ENCODE measurements at regions of chr4 and their contacts with region 1.

Region 1: GRCh38 chr4:110631584-110632505 is 9.0 kb upstream of the PITX2 start:
- DNase-seq: no peak
- ATAC-seq: peak; percentile 99
- H3K4me3 ChIP-seq: no peak overlapping the region
- H3K27ac ChIP-seq: no peak overlapping the region
- H3K4me1 ChIP-seq: no peaks in the 10 kb centered on the region
- H3K27me3 ChIP-seq: peaks cover 18 to 42% of the 10 kb centered on the region in 2 experiments
- CTCF ChIP-seq: peak; percentile 52 to 75 (median 61)
- EP300 ChIP-seq: no peak
- POLR2A ChIP-seq: no peak
- RAD21 ChIP-seq: peak; percentile 61

Region 2: DNA sequence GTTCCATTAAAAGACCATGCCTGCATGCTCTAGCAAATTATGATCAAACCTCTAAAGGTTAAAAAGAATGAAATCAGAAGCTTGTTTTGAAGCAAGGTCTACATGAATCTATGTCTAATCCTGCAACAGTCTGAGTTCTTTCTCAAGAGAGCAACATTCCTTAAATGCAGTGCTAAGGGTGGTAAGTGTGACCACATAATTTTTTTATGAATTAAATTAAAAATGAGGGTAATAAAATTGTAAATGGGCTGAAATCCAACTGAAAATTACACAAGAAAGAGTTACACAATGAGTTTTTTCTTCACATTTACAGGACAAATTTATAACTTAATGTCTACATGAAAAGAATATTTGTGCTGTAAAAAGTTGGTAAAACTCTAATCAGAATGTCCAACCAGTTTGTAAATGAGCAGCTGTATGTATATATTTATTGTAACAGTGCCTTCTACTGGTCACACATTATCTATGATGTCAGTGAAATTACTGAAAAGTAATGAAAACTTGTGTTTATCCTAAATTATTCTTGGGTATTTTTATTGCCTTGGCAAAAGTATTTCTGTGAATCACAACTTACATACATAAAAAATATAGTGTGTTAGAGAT is 327.3 kb after region 1 on chr4:
- CTCF ChIA-PET with region 1: interaction called, 9 read pairs
- POLR2A ChIA-PET with region 1: no interaction called
- RAD21 ChIA-PET with region 1: no interaction called
- SMC1A ChIA-PET with region 1: interaction called, 3 read pairs
- in situ Hi-C with region 1: loop called (anchors 10 kb)
- intact Hi-C with region 1: loop called (anchors 5 kb)
- DNase-seq: no peak
- ATAC-seq: no peak
- H3K4me3 ChIP-seq: no peak overlapping the region
- H3K27ac ChIP-seq: no peak overlapping the region
- H3K4me1 ChIP-seq: no peaks in the 10 kb centered on the region
- H3K27me3 ChIP-seq: no peaks in the 10 kb centered on the region
- CTCF ChIP-seq: peak in 1 of 3 experiments; percentile 29; a peak in 2 of 6 replicates
- EP300 ChIP-seq: no peak
- POLR2A ChIP-seq: no peak
- RAD21 ChIP-seq: peak; percentile 35; the same call in 1 of the 2 replicates

Region 3: GRCh38 chr4:110970642-110971041 is 338.8 kb after region 1 on chr4:
- CTCF ChIA-PET with region 1: interaction called, 4 read pairs
- POLR2A ChIA-PET with region 1: no interaction called
- RAD21 ChIA-PET with region 1: no interaction called
- SMC1A ChIA-PET with region 1: interaction called, 3 read pairs
- in situ Hi-C with region 1: loop called (anchors 10 kb)
- intact Hi-C with region 1: loop called (anchors 1 kb)
- DNase-seq: no peak
- ATAC-seq: peak; percentile 90
- H3K4me3 ChIP-seq: no peak overlapping the region
- H3K27ac ChIP-seq: no peak overlapping the region
- H3K4me1 ChIP-seq: no peaks in the 10 kb centered on the region
- H3K27me3 ChIP-seq: no peaks in the 10 kb centered on the region
- CTCF ChIP-seq: peak; percentile 56 to 65 (median 61)
- EP300 ChIP-seq: no peak
- POLR2A ChIP-seq: no peak
- RAD21 ChIP-seq: peak; percentile 56

Region 4: GRCh38 chr4:111283061-111283677 is 651.3 kb after region 1 on chr4:
- CTCF ChIA-PET with region 1: interaction called, 4 read pairs
- POLR2A ChIA-PET with region 1: no interaction called
- RAD21 ChIA-PET with region 1: no interaction called
- SMC1A ChIA-PET with region 1: interaction called, 5 read pairs
- in situ Hi-C with region 1: loop called (anchors 25 kb)
- intact Hi-C with region 1: loop called (anchors 1 kb)
- DNase-seq: no peak
- ATAC-seq: peak; percentile 63
- H3K4me3 ChIP-seq: no peak overlapping the region
- H3K27ac ChIP-seq: no peak overlapping the region
- H3K4me1 ChIP-seq: no peaks in the 10 kb centered on the region
- H3K27me3 ChIP-seq: no peaks in the 10 kb centered on the region
- CTCF ChIP-seq: peak; percentile 86 to 94 (median 90)
- EP300 ChIP-seq: no peak
- POLR2A ChIP-seq: no peak
- RAD21 ChIP-seq: peak; percentile 75

Region 5: GRCh38 chr4:111631215-111631999 is 999.6 kb after region 1 on chr4:
- CTCF ChIA-PET with region 1: interaction called, 3 read pairs
- POLR2A ChIA-PET with region 1: no interaction called
- RAD21 ChIA-PET with region 1: no interaction called
- SMC1A ChIA-PET with region 1: no interaction called
- in situ Hi-C with region 1: loop called (anchors 25 kb)
- intact Hi-C with region 1: loop called (anchors 1 kb)
- DNase-seq: no peak
- ATAC-seq: peak; percentile 69
- H3K4me3 ChIP-seq: no peak overlapping the region
- H3K27ac ChIP-seq: no peak overlapping the region
- H3K4me1 ChIP-seq: no peaks in the 10 kb centered on the region
- H3K27me3 ChIP-seq: no peaks in the 10 kb centered on the region
- CTCF ChIP-seq: peak in 2 of 3 experiments; percentile 32 to 50; a peak in 4 of 6 replicates
- EP300 ChIP-seq: no peak
- POLR2A ChIP-seq: no peak
- RAD21 ChIP-seq: 0 out of 2 replicates have a peak, but pooled peaks have one; percentile 22

Region 6: DNA sequence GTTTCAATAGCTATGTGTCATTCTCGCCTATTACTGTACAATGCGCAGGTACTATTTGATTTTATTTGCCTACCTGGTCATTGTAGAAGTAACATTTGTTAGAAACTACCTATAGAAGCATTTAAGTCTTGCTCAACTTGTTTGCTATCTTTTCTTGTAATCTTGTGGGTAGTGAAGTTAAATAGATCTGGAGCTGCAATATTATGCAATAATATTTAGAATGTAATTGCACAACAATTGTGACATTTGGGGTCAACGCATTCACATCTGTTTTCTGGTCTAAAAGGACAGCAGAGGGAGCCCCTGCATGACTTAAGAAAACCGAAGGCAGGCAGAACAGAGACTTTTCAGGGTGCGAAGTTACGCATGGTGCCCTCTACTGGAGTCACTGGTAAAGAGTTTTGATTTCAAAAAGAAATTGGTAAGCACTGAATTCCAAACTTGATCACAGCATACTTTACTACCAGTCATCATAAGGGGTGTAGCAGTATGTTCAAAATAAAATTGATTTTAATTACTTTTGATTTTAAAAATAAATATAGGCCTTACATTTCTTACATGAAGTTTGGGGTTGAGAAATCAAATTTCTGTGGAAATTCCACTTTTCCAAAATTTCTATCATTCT is 1010.2 kb after region 1 on chr4:
- CTCF ChIA-PET with region 1: no interaction called
- POLR2A ChIA-PET with region 1: no interaction called
- RAD21 ChIA-PET with region 1: no interaction called
- SMC1A ChIA-PET with region 1: no interaction called
- in situ Hi-C with region 1: loop called (anchors 25 kb)
- intact Hi-C with region 1: no loop called
- DNase-seq: peak; percentile 13
- ATAC-seq: peak; percentile 98
- H3K4me3 ChIP-seq: no peak overlapping the region
- H3K27ac ChIP-seq: no peak overlapping the region
- H3K4me1 ChIP-seq: no peaks in the 10 kb centered on the region
- H3K27me3 ChIP-seq: no peaks in the 10 kb centered on the region; a peak in 1 of 4 replicates
- CTCF ChIP-seq: peak; percentile 80 to 97 (median 83)
- EP300 ChIP-seq: no peak
- POLR2A ChIP-seq: no peak
- RAD21 ChIP-seq: peak; percentile 74